ENCODE measurements at regions of chr11 and their contacts with region 1.

Region 1: GRCh38 chr11:108551651-108552462 is 41.7 kb downstream of the EXPH5 start:
- DNase-seq: peak; percentile 74 to 92 (median 81)
- ATAC-seq: peak; percentile 94
- H3K4me3 ChIP-seq: peak overlapping the region; percentile 1; the same call in 1 of the 2 replicates
- H3K27ac ChIP-seq: peak overlapping the region; percentile 62
- H3K4me1 ChIP-seq: peaks cover 13 to 46% of the 10 kb centered on the region in 2 experiments; a peak in 4 of 5 replicates
- H3K27me3 ChIP-seq: no peaks in the 10 kb centered on the region
- CTCF ChIP-seq: no peak
- EP300 ChIP-seq: peak; percentile 84
- POLR2A ChIP-seq: no peak
- RAD21 ChIP-seq: no peak; a peak in 1 of 4 replicates

Region 2: DNA sequence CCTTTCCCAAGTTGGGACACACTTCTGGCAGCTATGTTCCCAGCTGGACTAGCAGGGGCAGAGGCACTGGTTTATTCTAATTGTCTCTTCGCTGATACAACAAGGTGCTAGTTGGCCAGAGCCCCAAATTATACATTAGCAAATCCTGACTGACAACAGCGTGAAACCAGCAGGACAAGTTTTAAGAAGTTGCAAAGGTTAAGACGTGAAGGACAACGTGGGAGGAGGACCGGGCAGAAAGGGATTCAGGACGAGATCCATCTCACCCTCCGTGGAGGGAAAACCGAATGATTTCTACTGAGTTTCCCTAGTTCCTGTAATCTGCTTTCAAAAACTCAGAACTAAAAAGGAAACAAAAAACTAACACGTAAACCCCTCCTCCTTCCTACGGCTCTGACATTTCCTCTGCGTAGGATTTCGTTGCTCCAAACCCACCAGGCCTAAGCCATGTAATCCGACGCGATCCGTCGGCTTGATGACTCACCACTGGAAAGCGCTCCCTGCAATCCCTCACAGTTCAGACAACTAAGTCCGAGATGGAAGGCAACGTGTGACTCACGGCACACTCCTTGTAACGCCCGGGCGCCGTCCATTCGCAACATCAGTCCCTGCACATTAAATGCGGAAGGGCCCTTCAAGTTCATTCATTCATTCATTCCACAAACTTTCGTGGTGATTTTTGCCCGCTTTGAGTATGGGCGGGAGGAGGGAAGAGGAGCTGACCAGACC is 54.4 kb before region 1 on chr11:
- CTCF ChIA-PET with region 1: no interaction called
- POLR2A ChIA-PET with region 1: no interaction called
- in situ Hi-C with region 1: no loop called
- intact Hi-C with region 1: loop called (anchors 5 kb)
- DNase-seq: peak; percentile 73 to 97 (median 81)
- ATAC-seq: peak; percentile 88
- H3K4me3 ChIP-seq: peak overlapping the region; percentile 59
- H3K27ac ChIP-seq: peak overlapping the region; percentile 97
- H3K4me1 ChIP-seq: peaks cover 17 to 37% of the 10 kb centered on the region in 2 experiments
- H3K27me3 ChIP-seq: no peaks in the 10 kb centered on the region
- CTCF ChIP-seq: no peak
- EP300 ChIP-seq: peak; percentile 59; the same call in 1 of the 2 replicates
- POLR2A ChIP-seq: peak; percentile 95
- RAD21 ChIP-seq: no peak

Measured in K562 (cell line).